ENCODE measurements at regions of chr9 and their contacts with region 1.

Region 1: DNA sequence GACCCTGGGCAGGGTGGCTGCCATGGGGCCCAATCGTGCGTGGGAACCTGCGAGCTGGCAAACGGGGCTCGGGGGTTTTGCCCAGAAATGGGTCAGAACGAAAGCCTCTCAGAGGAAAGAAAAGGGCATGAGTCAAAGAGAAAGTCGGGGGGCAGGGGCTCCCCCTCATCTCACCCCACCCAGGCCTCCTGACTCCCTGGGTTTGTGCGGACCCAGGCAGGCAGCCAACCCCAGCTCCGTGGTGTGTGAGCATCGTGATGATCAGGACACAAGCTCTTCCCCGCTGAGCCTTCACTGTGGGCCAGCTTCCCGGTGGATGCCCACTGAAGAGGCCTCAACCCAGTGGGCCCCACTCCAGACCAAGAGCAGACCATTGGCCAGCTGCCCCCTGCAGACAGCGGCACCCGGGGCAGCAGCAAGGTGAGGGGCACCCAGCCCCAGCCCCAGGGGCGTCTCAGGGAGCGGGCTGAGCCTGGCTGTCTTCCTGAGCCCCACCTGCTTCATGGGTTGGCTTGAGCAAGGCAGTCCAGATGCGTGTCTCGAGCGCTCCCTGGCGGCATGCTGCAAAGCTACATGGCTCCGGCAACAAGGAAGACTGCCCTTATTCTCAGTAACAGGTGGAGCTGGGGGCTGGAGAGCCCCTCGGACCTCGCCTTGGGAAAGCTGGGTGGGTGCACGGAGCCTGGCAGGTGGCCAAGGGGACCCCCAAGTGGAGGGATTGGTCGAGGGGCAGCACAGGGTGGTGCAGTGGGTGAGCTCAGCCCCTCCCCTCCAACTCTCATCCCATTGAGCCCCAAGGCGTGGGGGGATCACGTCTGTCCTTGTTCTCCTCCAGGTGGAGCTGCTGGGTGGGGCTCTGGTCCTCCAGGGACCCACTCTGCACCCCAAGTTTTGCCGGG is 3.2 kb upstream of the FUT7 start:
- DNase-seq: peak; percentile 80
- H3K4me3 Mint-ChIP-seq: peak overlapping the region; percentile 65
- H3K27ac Mint-ChIP-seq: peak overlapping the region; percentile 79
- H3K4me1 Mint-ChIP-seq: peaks cover 28% of the 10 kb centered on the region
- H3K27me3 Mint-ChIP-seq: no peaks in the 10 kb centered on the region

Region 2: DNA sequence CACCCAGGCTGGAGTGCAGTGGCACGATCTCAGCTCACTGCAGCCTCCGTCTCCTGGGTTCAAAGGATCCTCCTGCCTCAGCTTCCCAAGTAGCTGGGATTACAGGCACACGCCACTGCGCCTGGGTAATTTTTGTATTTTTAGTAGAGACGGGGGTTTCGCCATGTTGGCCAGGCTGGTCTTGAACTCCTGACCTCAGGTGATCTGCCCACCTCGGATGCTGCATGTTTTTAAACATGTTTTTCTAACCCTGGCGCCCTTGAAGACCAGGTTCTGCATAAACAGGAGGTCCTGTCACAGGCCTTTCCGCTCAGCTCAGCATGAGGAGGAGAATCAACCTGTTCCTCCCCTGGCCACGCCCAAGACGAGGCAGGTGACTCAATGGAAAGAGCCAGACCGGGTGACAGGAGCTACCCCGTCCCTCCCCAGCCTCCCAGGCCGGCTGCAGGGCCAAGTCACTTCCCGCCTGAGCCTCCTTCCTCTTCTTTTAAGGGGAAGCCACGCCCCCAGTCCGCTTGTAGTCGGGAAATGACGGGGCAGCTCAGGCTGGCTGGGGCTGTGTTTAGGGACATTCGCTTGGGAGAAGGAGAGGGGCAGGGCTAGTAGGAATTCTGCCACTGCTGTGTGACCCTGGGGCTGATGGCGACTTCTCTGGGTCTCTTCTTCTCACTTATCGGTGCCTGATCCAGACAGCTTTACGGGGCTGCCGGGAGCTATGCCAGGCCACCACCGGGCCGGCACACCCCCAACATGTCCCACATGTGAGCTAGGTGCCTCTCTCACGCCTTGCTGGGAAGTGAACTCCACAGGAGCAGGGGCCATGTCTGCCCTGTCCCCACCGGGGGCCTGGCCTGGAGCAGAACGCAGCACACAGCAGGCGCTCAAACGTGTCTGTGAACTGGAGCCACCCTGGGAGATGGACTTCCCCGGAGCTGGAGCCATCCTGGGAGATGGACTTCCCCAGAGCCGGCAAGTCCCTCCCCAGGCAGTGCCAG is 495.4 kb before region 1 on chr9:
- intact Hi-C with region 1: loop called (anchors 10 kb)
- DNase-seq: peak; percentile 92
- H3K4me3 Mint-ChIP-seq: peak overlapping the region; percentile 89
- H3K27ac Mint-ChIP-seq: peak overlapping the region; percentile 100
- H3K4me1 Mint-ChIP-seq: peaks cover 37% of the 10 kb centered on the region
- H3K27me3 Mint-ChIP-seq: no peaks in the 10 kb centered on the region

Region 3: GRCh38 chr9:136790927-136791641 is 244.0 kb before region 1 on chr9 and contains the start of gene TMEM141:
- intact Hi-C with region 1: loop called (anchors 1 kb)
- DNase-seq: peak; percentile 100
- H3K4me3 Mint-ChIP-seq: peak within 1 kb of the TSS; percentile 80
- H3K27ac Mint-ChIP-seq: peak within 1 kb of the TSS; percentile 80
- H3K4me1 Mint-ChIP-seq: peaks cover 23% of the 10 kb centered on the region
- H3K27me3 Mint-ChIP-seq: peaks cover 6% of the 10 kb centered on the region
- total RNA-seq, gene TMEM141: 34.4 and 34.7 TPM in 2 replicates

Region 4: DNA sequence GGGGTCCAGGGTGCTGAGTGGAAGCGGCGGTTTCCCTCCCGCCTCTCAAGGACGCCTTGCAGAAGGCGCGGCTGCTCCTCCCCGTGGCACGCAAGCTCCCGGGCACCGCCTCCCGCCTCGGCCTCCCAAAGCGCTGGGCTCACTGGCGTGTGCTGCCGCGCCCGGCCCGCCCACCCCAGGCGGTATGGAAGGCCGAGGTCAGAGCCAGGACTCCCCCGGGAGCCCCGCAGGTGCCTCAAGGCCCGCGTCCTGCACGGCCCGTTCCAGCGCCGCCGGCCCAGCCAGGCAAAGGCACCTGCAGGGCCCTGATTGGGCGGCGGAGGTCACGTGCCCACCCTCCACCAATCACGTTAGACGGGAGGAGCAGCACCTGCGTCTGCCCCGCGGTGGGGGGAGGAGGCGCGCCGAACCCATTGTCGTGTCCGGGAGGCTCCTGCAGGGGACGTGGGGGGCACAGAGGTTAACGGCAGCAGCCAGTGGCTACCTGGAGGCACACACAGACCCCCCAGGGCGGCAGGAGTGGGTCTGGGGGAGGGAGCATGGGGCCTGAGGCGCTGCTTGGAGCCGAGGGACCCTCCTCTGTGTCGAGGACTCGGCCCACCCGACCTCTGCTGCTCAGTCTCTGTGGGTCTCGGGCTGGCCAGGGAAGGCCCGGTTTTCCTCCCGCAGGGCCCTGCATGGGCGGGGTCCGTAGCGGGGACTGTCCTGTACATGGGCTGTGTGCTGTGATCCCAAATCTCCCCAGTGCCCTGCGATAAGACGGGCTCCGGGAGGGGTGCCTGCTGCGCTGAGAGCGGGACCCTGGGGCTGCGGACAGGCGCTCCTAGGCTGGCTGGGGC is 85.1 kb before region 1 on chr9:
- intact Hi-C with region 1: loop called (anchors 10 kb)
- DNase-seq: peak; percentile 94
- H3K4me3 Mint-ChIP-seq: peak overlapping the region; percentile 81
- H3K27ac Mint-ChIP-seq: peak overlapping the region; percentile 87
- H3K4me1 Mint-ChIP-seq: no peaks in the 10 kb centered on the region
- H3K27me3 Mint-ChIP-seq: no peaks in the 10 kb centered on the region

Region 5: GRCh38 chr9:137000177-137000883 is 34.8 kb before region 1 on chr9:
- intact Hi-C with region 1: loop called (anchors 2 kb)
- DNase-seq: peak; percentile 27
- H3K4me3 Mint-ChIP-seq: no peak overlapping the region
- H3K27ac Mint-ChIP-seq: peak overlapping the region; percentile 55
- H3K4me1 Mint-ChIP-seq: peaks cover 23% of the 10 kb centered on the region
- H3K27me3 Mint-ChIP-seq: peaks cover 3% of the 10 kb centered on the region

Measured in activated T-helper 2 cell treated with anti-CD3 and anti-CD28 coated beads, Interferon-gamma antibody, Interleukin-2, Interleukin-4, amounts not matched to agents 10 μg/mL and 5 μg/mL and 100 μg/mL, durations not matched to agents 14 hours and 24 hours and 36 hours (primary cell).